OCI-LY7 (cell line): ENCODE measurements at regions of chr12 and their contacts with region 1.

Region 1: GRCh38 chr12:1544996-1545700 is 49.2 kb downstream of the FBXL14 start:
- DNase-seq: peak; percentile 30
- H3K4me3 ChIP-seq: peak overlapping the region; percentile 22
- H3K27ac ChIP-seq: peak overlapping the region; percentile 50
- H3K4me1 ChIP-seq: peaks cover 59% of the 10 kb centered on the region
- CTCF ChIP-seq: peak; percentile 74

Region 2: DNA sequence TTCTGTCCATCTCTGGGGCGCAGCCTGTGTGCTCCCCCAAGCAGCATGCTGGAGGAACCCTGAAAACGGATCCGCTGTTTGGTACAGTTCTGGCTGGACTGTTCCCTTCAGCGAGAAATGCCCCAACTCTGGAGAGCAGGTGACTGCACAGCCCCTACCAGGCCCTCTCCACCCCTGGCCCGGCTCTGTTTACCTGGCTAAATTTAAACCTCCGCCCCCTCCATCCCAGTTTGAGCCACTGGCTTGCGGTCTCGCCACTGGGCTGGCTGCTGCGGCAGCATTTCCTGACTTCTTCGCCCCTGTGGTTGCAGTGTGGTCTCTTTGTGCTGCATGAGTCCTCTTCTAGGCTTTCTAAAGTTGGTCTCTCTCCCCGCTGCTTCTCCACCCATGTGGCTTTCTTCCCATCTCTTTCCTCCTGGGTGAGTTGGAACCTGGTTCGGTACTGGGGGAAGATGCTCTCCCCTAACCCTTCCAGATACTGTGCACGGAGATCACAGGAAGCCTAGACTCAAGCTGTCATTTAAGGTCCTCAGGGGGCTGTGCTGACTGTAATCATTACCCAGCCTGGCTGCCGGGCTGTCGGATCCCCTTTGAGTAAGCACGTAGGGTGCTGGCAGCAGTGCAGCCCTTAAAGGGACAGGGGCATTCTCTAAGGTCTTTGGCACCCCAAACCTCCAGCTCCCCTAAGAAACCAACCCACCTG is 11.4 kb before region 1 on chr12:
- CTCF ChIA-PET with region 1: interaction called, 3 read pairs
- POLR2A ChIA-PET with region 1: interaction called, 16 read pairs
- intact Hi-C with region 1: no loop called
- DNase-seq: peak; percentile 83
- H3K4me3 ChIP-seq: peak overlapping the region; percentile 68
- H3K27ac ChIP-seq: peak overlapping the region; percentile 79
- H3K4me1 ChIP-seq: peaks cover 49% of the 10 kb centered on the region
- CTCF ChIP-seq: 0 out of 2 replicates have a peak, but pooled peaks have one; percentile 31

Region 3: DNA sequence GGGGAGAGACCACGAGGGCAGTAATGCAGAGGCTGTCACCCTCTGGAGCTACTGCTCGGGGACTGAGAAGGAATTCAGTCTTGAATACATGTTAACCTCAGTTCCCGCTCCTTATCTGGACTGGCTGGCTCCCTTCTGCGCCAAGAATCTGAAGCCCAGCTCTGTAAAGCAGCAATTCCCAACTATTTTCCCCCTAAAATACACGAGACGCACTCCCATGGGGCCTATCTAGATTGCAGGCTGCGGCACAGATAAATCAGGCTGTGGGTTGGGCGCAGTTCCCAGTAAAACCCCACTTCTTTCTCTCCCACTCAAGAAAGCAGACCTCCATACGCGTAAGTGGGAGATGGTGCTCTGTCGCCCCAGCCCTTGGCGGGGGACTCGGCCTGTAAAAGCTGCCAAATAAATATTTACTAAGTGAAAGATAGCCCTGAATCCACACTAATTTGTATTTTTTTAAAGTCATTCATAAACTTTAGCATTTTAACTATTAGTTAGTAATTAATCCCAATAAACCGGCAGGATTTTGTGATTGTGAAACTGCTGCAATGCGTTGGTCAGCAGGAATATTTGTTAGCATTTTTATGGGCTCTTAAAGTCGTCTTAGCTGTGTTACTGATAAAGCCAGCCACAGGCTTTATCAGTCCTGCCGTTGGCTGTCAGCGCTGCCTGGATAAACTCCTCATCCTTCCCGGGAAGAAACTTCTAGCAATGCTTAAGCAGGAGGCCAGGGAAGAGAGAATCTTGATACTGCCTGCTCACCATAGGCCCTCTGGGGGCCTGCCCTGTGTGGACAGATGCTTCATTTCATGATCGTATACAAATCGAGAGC is 31.5 kb after region 1 on chr12:
- CTCF ChIA-PET with region 1: no interaction called
- POLR2A ChIA-PET with region 1: no interaction called
- intact Hi-C with region 1: no loop called
- DNase-seq: no peak
- H3K4me3 ChIP-seq: no peak overlapping the region
- H3K27ac ChIP-seq: no peak overlapping the region
- H3K4me1 ChIP-seq: peaks cover 7% of the 10 kb centered on the region
- CTCF ChIP-seq: no peak

Region 4: DNA sequence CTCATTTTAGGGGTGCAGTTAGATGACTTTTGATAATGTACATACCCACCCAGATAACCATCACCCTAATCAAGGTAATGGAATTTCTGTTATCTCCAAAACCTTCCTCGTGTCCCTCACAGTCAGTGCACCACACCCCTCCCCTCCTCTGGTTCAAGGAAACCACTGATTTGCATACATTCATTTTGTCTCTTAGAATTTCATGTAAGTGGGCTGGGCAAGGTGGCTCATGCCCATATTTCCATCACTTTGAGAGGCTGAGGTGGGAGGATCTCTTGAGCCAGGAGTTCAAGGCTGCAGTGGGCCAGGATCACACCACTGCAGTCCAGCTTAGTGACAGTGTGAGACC is 161.5 kb after region 1 on chr12:
- CTCF ChIA-PET with region 1: no interaction called
- POLR2A ChIA-PET with region 1: no interaction called
- intact Hi-C with region 1: no loop called
- DNase-seq: no peak
- H3K4me3 ChIP-seq: no peak overlapping the region
- H3K27ac ChIP-seq: no peak overlapping the region
- H3K4me1 ChIP-seq: peaks cover 12% of the 10 kb centered on the region
- CTCF ChIP-seq: no peak